K562 (cell line): ENCODE measurements at regions of chr1 and their contacts with region 1.

Region 1: GRCh38 chr1:21782868-21783678 is at the start of gene USP48:
- DNase-seq: peak; percentile 96 to 100 (median 98)
- ATAC-seq: peak; percentile 81
- H3K4me3 ChIP-seq: peak within 1 kb of the TSS; percentile 61
- H3K27ac ChIP-seq: peak within 1 kb of the TSS; percentile 99
- H3K4me1 ChIP-seq: peaks cover 17 to 31% of the 10 kb centered on the region in 2 experiments; a peak in 4 of 5 replicates
- H3K27me3 ChIP-seq: no peaks in the 10 kb centered on the region
- CTCF ChIP-seq: no peak
- EP300 ChIP-seq: peak; percentile 36
- POLR2A ChIP-seq: peak; percentile 100
- RAD21 ChIP-seq: no peak
- polyA plus RNA-seq, gene USP48: 23.3 to 30.3 TPM

Region 2: DNA sequence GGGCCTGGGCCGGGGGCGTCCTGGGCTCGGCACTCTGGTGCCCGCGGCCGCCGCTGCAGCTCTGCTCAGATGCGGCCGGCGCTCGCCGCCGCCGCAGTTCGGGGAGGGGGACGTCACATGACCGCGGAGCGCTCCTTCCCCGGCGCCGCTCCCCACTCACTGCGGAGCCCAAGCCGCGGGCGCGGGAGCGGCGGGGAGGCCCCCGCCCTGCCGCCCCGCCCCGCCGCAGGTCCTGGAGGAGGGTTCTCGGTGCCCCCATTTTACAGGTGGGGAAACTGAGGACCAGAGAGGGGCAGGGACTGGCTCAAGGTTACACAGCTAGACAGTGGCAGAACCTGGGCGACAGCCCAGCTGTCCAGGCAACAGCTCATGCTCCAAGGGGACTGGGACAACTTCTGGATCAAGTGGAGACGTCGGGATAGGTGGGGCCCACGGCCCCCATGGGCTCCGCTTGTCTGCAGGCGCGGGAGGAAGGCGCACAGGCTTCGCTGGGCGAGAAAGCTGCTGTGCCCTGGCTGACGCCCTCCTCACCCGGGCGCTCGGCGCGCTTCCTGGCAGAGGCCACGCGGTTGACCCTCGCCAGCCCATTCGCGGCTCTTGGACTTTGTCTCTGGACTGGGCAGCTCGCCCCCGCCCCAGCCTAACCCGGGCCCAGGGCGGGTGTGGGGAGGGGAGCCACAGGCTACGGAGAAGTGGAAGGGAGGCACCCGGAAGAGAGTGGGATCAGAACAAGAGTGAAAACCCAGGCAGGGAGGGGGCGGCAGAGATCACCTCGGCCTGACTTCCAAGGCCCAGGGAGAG is 113.6 kb before region 1 on chr1 and contains the start of gene RAP1GAP:
- CTCF ChIA-PET with region 1: interaction called, 3 read pairs
- POLR2A ChIA-PET with region 1: no interaction called
- in situ Hi-C with region 1: no loop called
- intact Hi-C with region 1: loop called (anchors 5 kb)
- DNase-seq: peak; percentile 89 to 93 (median 92)
- ATAC-seq: peak; percentile 87
- H3K4me3 ChIP-seq: peak within 1 kb of the TSS; percentile 56
- H3K27ac ChIP-seq: peak within 1 kb of the TSS; percentile 85
- H3K4me1 ChIP-seq: peaks cover 40 to 51% of the 10 kb centered on the region in 2 experiments
- H3K27me3 ChIP-seq: no peaks in the 10 kb centered on the region
- CTCF ChIP-seq: peak; percentile 39 to 60 (median 54); a peak in 4 of 6 replicates
- EP300 ChIP-seq: no peak
- POLR2A ChIP-seq: peak; percentile 56; the same call in 1 of the 2 replicates
- RAD21 ChIP-seq: peak; percentile 34 to 62
- polyA plus RNA-seq, gene RAP1GAP: 0.29 to 0.51 TPM

Region 3: DNA sequence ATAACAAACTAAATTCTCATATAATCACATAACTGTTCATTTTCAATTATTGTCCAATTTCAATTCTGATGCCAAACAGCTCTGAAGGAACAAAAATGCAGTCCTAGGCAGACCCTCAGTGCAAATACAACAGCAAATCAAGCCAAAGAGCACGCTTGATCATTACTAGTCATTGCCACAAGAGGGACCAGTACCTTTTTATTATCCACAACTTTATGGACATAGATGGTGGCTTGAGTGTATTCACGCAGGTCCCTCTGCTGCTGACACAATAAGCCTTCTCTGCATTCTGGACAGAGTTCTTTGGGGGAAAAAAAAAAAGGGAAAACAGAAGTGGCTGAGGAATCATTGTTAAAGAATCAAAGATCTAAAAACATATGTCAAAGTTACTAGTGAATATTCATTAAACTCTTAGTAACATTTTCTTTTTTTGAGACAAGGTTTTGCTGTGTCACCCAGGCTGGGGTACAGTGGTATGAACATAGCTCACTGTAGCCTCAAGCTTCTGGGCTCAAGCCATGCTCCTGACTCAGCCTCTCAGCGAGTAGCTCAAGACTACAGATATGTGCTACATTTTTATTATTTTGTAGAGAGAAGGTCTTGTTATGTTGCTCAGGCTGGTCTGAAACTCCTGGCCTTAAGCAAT is 79.6 kb before region 1 on chr1:
- CTCF ChIA-PET with region 1: interaction called, 3 read pairs
- POLR2A ChIA-PET with region 1: no interaction called
- in situ Hi-C with region 1: no loop called
- intact Hi-C with region 1: loop called (anchors 1 kb)
- DNase-seq: peak; percentile 47 to 71 (median 54)
- ATAC-seq: peak; percentile 89
- H3K4me3 ChIP-seq: no peak overlapping the region
- H3K27ac ChIP-seq: peak overlapping the region; percentile 59
- H3K4me1 ChIP-seq: peaks cover 0 to 16% of the 10 kb centered on the region in 2 experiments; a peak in 2 of 5 replicates
- H3K27me3 ChIP-seq: no peaks in the 10 kb centered on the region
- CTCF ChIP-seq: peak; percentile 69
- EP300 ChIP-seq: no peak
- POLR2A ChIP-seq: no peak
- RAD21 ChIP-seq: peak; percentile 45 to 72; a peak in 3 of 4 replicates

Region 4: DNA sequence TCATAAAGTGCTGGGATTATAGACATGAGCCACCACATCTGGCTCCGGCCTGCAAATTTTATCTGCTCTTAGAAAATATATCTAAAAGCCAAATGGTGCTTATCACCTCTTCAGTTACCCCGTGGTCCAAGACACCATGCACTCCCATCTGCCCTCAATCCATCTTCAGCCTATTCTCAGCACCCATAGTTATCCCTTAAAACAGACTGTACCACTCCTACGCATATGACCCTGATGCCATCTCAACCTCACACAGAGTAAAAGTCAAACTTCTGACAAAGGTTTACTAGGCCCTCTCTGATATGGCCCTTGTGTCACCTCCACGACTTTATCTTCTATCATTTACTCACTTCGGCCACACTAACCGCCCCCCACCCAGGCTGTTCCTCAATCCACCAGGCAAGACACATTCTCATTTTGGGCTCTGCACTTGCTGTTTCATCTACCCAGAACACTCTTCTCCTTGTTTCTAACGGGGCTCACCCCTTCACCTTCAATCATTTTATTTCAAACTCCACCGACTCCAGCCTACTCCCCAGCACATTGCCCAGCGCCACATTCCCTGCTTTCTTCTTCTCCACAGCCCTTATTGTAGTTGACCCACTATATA is 33.1 kb before region 1 on chr1:
- CTCF ChIA-PET with region 1: no interaction called
- POLR2A ChIA-PET with region 1: interaction called, 3 read pairs
- in situ Hi-C with region 1: no loop called
- intact Hi-C with region 1: loop called (anchors 2 kb)
- DNase-seq: peak; percentile 69 to 93 (median 76)
- ATAC-seq: peak; percentile 86
- H3K4me3 ChIP-seq: no peak overlapping the region
- H3K27ac ChIP-seq: peak overlapping the region; percentile 72
- H3K4me1 ChIP-seq: peaks cover 19 to 25% of the 10 kb centered on the region in 2 experiments
- H3K27me3 ChIP-seq: no peaks in the 10 kb centered on the region
- CTCF ChIP-seq: no peak
- EP300 ChIP-seq: peak; percentile 91
- POLR2A ChIP-seq: no peak
- RAD21 ChIP-seq: peak; percentile 10 to 23; a peak in 2 of 4 replicates

Region 5: DNA sequence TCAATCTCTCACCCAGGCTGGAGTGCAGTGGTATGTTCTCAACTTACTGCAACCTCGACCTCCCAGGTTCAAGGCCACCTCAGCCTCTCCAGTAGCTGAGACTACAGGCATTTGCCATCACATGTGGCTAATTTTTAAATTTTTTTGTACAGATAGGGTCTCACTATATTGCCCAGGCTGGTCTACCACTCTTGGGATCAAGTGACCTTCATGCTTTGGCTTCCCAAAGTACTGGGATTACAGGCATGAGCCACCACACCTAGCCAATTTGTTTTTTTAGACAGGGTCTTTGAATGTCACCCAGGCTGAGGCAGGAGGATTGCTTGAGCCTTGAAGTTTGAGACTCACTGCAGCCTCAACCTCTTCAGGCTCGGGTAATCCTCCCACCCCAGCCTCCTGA is 10.0 kb after region 1 on chr1:
- CTCF ChIA-PET with region 1: no interaction called
- POLR2A ChIA-PET with region 1: interaction called, 17 read pairs
- in situ Hi-C with region 1: no loop called
- intact Hi-C with region 1: no loop called
- DNase-seq: no peak
- ATAC-seq: no peak
- H3K4me3 ChIP-seq: no peak overlapping the region
- H3K27ac ChIP-seq: peak overlapping the region; percentile 97; the same call in 1 of the 3 replicates
- H3K4me1 ChIP-seq: peaks cover 19 to 24% of the 10 kb centered on the region in 2 experiments
- H3K27me3 ChIP-seq: no peaks in the 10 kb centered on the region
- CTCF ChIP-seq: no peak
- EP300 ChIP-seq: no peak
- POLR2A ChIP-seq: no peak
- RAD21 ChIP-seq: no peak

Region 6: DNA sequence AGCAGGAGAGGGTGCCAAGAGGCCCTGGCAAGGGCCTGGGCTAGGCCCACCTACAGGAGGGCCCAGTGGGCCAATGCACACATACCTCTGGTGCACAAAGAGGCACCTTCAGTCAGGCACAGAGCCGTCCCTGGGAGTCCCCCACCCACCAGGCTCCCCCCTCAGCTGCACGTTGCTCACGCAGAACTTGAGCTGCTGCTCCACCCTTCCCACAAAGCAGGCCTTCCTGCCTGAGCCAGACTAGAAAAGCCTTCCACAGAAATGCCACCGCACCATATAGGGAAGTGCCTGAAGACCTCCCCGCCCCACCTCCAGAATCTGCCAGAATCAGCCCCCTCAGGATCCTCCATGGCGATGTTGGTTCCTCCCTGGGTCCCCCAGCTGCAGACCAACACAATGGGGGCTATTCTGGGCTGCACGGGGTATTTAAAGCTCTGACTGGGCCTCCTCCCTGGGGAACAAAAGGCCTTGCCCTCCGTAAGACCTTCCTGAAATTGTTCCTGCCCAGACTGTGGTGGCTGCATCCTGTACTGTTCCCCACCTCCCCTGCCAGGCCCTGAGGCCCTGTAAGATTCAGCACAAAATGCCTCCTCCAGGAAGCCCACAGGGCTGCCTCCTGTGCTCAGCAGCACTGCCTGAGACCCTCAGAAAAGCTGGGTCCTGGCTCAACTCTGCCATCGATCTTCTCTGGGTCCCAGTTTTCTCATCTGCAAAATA is 126.9 kb after region 1 on chr1:
- CTCF ChIA-PET with region 1: no interaction called
- POLR2A ChIA-PET with region 1: no interaction called
- in situ Hi-C with region 1: no loop called
- intact Hi-C with region 1: loop called (anchors 5 kb)
- DNase-seq: peak in 2 of 4 experiments; percentile 27 to 60
- ATAC-seq: no peak
- H3K4me3 ChIP-seq: no peak overlapping the region
- H3K27ac ChIP-seq: peak overlapping the region; percentile 46
- H3K4me1 ChIP-seq: peaks cover 76 to 81% of the 10 kb centered on the region in 2 experiments
- H3K27me3 ChIP-seq: no peaks in the 10 kb centered on the region
- CTCF ChIP-seq: no peak
- EP300 ChIP-seq: no peak
- POLR2A ChIP-seq: no peak
- RAD21 ChIP-seq: no peak

Region 7: DNA sequence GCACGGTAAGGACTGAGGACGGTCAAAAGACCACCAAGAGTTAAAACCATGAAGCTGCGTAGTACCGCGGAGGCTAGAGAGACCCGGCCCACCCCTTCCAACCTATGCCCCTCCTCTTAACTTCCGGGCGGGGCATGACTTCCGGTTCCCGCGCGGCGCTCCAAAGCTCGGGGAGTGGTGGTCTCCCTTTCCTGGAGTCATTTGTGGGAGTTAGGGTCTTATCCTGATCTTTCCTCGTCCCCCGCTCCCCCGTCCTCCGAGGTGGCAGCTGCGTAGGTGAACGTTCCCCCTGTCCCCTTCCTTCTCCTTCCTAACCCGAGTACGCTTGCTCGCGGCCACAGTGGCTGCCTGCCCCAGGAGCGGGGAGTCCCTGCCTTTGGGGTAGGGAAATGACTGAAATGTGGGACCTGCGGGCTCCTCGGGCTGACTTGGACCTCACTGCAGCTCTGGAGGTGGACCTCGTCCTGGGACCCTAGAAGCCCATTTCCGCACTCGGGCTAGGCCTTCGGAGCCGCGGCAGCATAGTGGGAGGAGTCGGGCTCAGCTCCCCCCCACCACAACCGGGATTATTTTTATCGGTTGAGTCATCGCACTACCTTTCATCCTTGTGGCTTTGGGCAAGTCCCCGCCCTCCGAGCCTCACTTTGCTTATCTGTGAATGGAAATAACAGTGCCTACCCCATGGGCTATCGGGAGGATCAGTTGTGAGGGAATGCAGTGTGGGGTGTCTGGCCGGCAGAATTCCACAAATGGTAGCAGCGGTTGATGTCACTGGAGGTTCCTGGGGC is 242.5 kb after region 1 on chr1:
- CTCF ChIA-PET with region 1: no interaction called
- POLR2A ChIA-PET with region 1: interaction called, 3 read pairs
- in situ Hi-C with region 1: no loop called
- intact Hi-C with region 1: loop called (anchors 5 kb)
- DNase-seq: peak; percentile 92 to 99 (median 94)
- ATAC-seq: peak; percentile 88
- H3K4me3 ChIP-seq: peak overlapping the region; percentile 73
- H3K27ac ChIP-seq: peak overlapping the region; percentile 99
- H3K4me1 ChIP-seq: peaks cover 24 to 28% of the 10 kb centered on the region in 2 experiments
- H3K27me3 ChIP-seq: no peaks in the 10 kb centered on the region
- CTCF ChIP-seq: no peak; a peak in 1 of 6 replicates
- EP300 ChIP-seq: peak; percentile 87
- POLR2A ChIP-seq: peak; percentile 99
- RAD21 ChIP-seq: 0 out of 4 replicates have a peak, but pooled peaks of 1 of the 2 experiments have one; percentile 12